Activated CD4-positive, alpha-beta T cell treated with anti-CD3 and anti-CD28 coated beads for 36 hours (primary cell): ENCODE measurements at regions of chr11 and their contacts with region 1.

Region 1: GRCh38 chr11:57456960-57457642 is 3.2 kb upstream of the RTN4RL2 start:
- DNase-seq: peak; percentile 87
- ATAC-seq: peak; percentile 36
- H3K4me3 Mint-ChIP-seq: peak overlapping the region; percentile 15
- H3K27ac Mint-ChIP-seq: no peak overlapping the region
- H3K4me1 Mint-ChIP-seq: peaks cover 27% of the 10 kb centered on the region
- H3K27me3 Mint-ChIP-seq: peaks cover 25% of the 10 kb centered on the region

Region 2: GRCh38 chr11:57345555-57346211 is 111.4 kb before region 1 on chr11:
- CTCF ChIA-PET with region 1: interaction called, 18 read pairs
- POLR2A ChIA-PET with region 1: no interaction called
- intact Hi-C with region 1: loop called (anchors 1 to 5 kb)
- DNase-seq: peak; percentile 84
- ATAC-seq: peak; percentile 87
- H3K4me3 Mint-ChIP-seq: no peak overlapping the region
- H3K27ac Mint-ChIP-seq: peak overlapping the region; percentile 52
- H3K4me1 Mint-ChIP-seq: peaks cover 5% of the 10 kb centered on the region
- H3K27me3 Mint-ChIP-seq: no peaks in the 10 kb centered on the region

Region 3: GRCh38 chr11:57444362-57445121 is 12.6 kb before region 1 on chr11:
- CTCF ChIA-PET with region 1: interaction called, 22 read pairs
- POLR2A ChIA-PET with region 1: no interaction called
- intact Hi-C with region 1: no loop called
- DNase-seq: no peak
- ATAC-seq: no peak
- H3K4me3 Mint-ChIP-seq: no peak overlapping the region
- H3K27ac Mint-ChIP-seq: no peak overlapping the region
- H3K4me1 Mint-ChIP-seq: no peaks in the 10 kb centered on the region
- H3K27me3 Mint-ChIP-seq: peaks cover 3% of the 10 kb centered on the region

Region 4: DNA sequence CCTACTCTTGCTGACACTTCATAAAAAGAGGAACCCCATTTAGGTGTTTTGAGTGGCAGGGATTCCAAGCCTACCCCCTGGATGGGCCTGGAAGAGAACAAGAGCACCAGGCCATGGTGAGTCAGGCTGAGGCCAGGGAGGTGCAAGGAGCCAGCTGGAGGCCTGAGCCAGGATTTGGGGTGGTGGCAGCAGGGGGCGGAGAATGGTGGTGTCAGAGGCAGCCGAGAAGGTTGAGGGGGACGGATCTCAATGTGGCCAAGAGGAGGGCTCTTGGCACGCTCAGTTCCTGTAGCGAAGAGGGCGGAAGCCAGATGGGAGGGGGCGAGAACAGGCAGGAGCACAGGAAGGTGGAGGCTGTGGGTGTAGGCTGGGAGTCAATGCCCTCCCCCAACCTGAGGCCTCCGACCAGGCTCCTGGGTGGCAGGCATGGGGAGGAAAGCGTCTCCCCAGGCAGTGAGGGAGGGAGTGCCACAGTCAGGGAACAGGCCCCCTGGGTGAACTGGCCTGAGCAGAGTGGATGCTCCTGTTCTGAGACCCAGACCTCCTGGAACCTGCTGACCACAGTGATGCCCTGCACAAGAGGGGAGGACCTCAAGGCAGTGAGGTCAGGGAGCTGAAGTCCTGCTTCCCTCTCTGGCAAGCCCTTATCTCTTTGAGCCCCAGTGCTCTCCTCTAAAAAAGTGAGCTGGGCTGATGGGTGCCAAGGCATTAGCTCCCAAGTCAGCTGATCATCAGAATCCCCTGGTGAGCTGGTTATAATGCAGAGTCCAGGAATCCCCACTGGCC is 17.1 kb after region 1 on chr11:
- CTCF ChIA-PET with region 1: interaction called, 124 read pairs
- POLR2A ChIA-PET with region 1: interaction called, 3 read pairs
- intact Hi-C with region 1: loop called in 1 of 2 experiments (anchors 1 kb)
- DNase-seq: peak; percentile 66
- ATAC-seq: peak; percentile 73
- H3K4me3 Mint-ChIP-seq: peak overlapping the region; percentile 8
- H3K27ac Mint-ChIP-seq: peak overlapping the region; percentile 14
- H3K4me1 Mint-ChIP-seq: peaks cover 30% of the 10 kb centered on the region
- H3K27me3 Mint-ChIP-seq: peaks cover 5% of the 10 kb centered on the region

Region 5: DNA sequence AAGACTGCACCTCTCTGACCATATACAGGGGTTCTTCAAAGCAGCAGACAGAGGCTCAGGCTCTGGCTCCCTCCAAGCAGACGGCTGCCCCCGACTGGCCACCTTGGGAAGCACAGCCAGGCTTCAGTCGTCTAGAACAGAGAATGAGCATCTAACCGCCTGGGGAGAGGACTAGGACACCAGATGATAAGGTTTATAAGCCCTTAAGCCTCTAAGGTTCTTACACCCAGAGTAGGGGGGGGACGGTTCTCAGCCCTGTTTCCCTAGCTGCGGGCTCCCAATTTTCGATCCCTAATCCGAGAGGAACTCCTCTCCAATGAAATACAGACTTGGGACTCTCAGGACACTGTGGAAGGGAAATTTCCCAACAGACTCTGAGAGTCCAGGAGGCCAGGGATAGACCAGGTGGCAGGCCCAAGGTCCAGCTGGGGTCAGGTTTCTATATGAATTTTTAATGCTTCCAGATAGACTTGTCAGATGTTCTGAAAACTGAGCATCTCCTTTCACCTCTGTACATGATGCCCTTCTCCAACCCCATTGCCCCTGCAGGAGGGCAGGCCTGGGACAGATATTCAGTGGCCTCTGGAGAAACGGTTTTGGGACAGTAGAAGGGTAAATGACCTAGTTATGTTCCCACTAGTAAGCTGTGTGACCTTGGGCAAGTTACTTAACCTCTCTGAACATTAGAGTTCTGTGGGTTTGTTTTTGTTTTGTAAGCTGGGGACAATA is 23.5 kb after region 1 on chr11:
- CTCF ChIA-PET with region 1: interaction called, 124 read pairs
- POLR2A ChIA-PET with region 1: interaction called, 3 read pairs
- intact Hi-C with region 1: loop called (anchors 1 kb)
- DNase-seq: peak; percentile 90
- ATAC-seq: peak; percentile 69
- H3K4me3 Mint-ChIP-seq: no peak overlapping the region
- H3K27ac Mint-ChIP-seq: no peak overlapping the region
- H3K4me1 Mint-ChIP-seq: peaks cover 15% of the 10 kb centered on the region
- H3K27me3 Mint-ChIP-seq: peaks cover 11% of the 10 kb centered on the region

Region 6: DNA sequence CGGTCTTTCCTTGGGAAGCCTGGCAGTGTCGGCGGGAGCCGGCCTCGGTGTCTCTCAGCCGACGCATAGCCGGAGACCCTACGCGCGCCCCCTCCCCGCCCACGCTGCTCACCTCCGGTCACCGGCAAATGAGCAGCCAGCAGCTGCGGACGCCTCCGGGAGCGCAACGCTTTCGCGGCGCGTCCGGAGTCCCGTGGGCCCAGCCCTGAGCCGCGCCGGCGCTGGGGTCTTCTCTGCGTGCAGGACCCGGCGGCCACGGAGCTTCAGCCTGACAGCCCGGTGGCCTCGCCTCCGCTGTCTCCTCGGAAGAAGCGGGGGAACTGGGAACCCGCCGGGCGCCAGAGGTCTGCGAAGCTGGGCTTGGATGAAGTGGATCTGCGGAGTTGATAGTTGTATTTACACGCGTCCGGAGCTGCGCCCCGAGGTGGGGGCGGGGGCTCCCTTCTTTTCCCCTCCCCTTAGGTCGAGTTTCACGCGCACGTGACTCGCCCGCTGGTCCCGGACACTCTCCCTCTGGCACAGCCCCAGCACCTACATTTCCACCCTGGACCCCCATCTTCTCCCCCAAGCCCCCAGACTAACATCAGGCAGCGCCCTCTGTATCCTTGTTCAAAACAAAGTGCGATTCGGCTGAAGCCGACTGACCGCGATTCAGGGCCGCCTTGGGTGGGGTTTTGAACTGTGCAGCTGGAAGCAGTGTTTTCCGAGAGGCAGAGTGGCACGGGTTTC is 58.4 kb after region 1 on chr11 and contains the start of gene SLC43A1:
- CTCF ChIA-PET with region 1: interaction called, 40 read pairs
- POLR2A ChIA-PET with region 1: no interaction called
- intact Hi-C with region 1: loop called in 1 of 2 experiments (anchors 1 kb)
- DNase-seq: peak; percentile 62
- ATAC-seq: peak; percentile 46
- H3K4me3 Mint-ChIP-seq: peak within 1 kb of the TSS; percentile 91
- H3K27ac Mint-ChIP-seq: peak within 1 kb of the TSS; percentile 91
- H3K4me1 Mint-ChIP-seq: peaks cover 31% of the 10 kb centered on the region
- H3K27me3 Mint-ChIP-seq: no peaks in the 10 kb centered on the region
- total RNA-seq, gene SLC43A1: 27.6 to 28.7 TPM

Region 7: GRCh38 chr11:57644748-57645688 is 187.9 kb after region 1 on chr11:
- CTCF ChIA-PET with region 1: interaction called, 20 read pairs
- POLR2A ChIA-PET with region 1: no interaction called
- intact Hi-C with region 1: loop called (anchors 1 kb)
- DNase-seq: peak; percentile 93
- ATAC-seq: peak; percentile 79
- H3K4me3 Mint-ChIP-seq: no peak overlapping the region
- H3K27ac Mint-ChIP-seq: no peak overlapping the region
- H3K4me1 Mint-ChIP-seq: peaks cover 33% of the 10 kb centered on the region
- H3K27me3 Mint-ChIP-seq: peaks cover 47% of the 10 kb centered on the region